ENCODE measurements at regions of chr6 and their contacts with region 1.

Region 1: GRCh38 chr6:138115877-138116660 is 8.8 kb upstream of the PERP start:
- DNase-seq: peak; percentile 68
- H3K4me3 Mint-ChIP-seq: no peak overlapping the region
- H3K27ac Mint-ChIP-seq: no peak overlapping the region
- H3K4me1 Mint-ChIP-seq: no peaks in the 10 kb centered on the region
- H3K27me3 Mint-ChIP-seq: peaks cover 25% of the 10 kb centered on the region
- CTCF ChIP-seq: peak; percentile 79

Region 2: DNA sequence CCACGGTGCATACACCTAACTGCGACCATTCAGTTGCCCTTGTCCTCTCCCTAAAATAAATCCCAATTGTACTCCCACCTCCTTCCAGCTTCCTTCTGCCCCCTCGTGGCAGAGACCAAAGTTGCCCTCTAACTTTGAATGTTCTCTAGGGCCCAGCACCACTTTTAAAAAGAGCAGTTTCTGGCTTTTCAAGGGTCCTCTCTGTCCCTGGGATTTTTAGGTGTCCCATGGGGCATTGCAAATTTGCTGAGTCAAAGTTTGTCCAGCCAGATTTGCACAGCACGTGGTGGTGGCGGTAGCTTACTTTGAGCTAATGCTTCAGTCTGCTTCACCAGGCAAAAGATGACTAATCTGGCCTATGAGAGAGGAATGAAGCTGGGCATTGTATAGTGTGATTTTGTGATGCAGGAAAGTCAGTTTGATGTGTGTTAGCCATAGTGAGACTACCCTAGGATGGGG is 109.0 kb before region 1 on chr6:
- CTCF ChIA-PET with region 1: interaction called, 40 read pairs
- POLR2A ChIA-PET with region 1: interaction called, 4 read pairs
- intact Hi-C with region 1: no loop called
- DNase-seq: peak; percentile 69
- H3K4me3 Mint-ChIP-seq: no peak overlapping the region
- H3K27ac Mint-ChIP-seq: peak overlapping the region; percentile 47
- H3K4me1 Mint-ChIP-seq: peaks cover 17% of the 10 kb centered on the region
- H3K27me3 Mint-ChIP-seq: no peaks in the 10 kb centered on the region
- CTCF ChIP-seq: peak; percentile 49

Region 3: DNA sequence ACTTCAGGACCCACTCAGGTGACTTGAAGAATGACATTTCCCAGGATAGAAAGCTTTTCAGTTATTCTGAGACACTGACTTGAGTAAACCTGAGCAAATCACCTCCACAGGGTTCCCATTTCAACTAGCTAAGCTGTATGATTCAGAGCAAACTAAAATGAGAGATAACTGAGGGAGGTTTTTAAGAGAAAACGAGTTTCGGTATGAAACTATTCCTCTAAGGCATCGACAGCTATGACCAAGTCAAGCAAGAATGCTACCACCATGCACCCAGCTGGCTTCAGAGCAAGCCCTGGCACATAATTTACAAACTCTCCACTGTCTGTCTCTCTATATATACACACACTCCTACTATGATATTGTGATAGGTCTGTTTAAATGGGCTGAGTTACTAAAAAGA is 84.2 kb before region 1 on chr6:
- CTCF ChIA-PET with region 1: no interaction called
- POLR2A ChIA-PET with region 1: no interaction called
- intact Hi-C with region 1: no loop called
- DNase-seq: peak; percentile 62
- H3K4me3 Mint-ChIP-seq: peak overlapping the region; percentile 55
- H3K27ac Mint-ChIP-seq: peak overlapping the region; percentile 91
- H3K4me1 Mint-ChIP-seq: peaks cover 62% of the 10 kb centered on the region
- H3K27me3 Mint-ChIP-seq: no peaks in the 10 kb centered on the region
- CTCF ChIP-seq: no peak

Region 4: GRCh38 chr6:138073264-138073663 is 42.8 kb before region 1 on chr6:
- CTCF ChIA-PET with region 1: no interaction called
- POLR2A ChIA-PET with region 1: no interaction called
- intact Hi-C with region 1: no loop called
- DNase-seq: no peak
- H3K4me3 Mint-ChIP-seq: no peak overlapping the region
- H3K27ac Mint-ChIP-seq: no peak overlapping the region
- H3K4me1 Mint-ChIP-seq: no peaks in the 10 kb centered on the region
- H3K27me3 Mint-ChIP-seq: no peaks in the 10 kb centered on the region
- CTCF ChIP-seq: no peak

Region 5: DNA sequence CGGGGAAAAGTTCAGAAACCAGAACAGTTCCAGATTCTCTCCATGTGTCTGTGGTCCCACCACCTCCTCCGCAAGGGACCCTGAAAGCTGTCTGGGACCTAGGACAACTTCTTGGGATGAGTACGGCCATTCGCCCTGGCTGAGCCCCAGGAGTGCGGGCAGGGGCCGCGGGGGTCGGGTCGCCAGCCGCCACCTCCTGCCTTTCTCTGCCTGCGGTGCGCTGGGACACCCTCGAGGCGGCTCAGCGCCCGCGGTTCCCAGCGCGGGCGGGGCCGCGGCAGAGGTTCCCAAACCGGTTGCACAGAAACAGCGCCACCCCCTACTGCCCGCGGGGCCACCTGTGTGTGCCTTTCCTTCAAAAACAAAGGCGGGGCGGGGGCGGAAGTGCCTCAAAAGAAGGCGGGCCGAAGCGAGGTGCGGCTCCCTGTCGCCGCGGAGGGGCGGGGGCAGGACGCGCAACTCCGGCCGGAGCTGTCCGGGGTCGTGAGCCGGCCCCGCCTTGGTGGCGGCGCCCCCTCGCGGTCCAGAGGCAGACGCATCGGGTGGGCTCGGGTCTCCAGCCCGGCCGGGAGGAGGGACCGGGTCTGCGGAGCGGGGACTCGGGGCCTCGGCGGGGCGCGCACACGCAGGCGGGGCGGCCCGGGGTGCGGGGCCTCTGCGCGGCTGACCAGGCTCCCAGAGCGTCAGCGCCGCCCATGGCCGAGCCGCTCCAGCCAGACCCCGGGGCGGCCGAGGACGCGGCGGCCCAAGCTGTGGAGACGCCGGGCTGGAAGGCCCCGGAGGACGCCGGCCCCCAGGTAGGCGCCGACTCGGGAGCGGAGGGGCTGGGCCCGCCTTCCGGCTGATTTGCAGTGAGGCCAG is 288.0 kb after region 1 on chr6 and contains the start of gene HEBP2:
- CTCF ChIA-PET with region 1: interaction called, 11 read pairs
- POLR2A ChIA-PET with region 1: interaction called, 4 read pairs
- intact Hi-C with region 1: loop called (anchors 2 kb)
- DNase-seq: peak; percentile 96
- H3K4me3 Mint-ChIP-seq: peak within 1 kb of the TSS; percentile 80
- H3K27ac Mint-ChIP-seq: peak within 1 kb of the TSS; percentile 77
- H3K4me1 Mint-ChIP-seq: peaks cover 11% of the 10 kb centered on the region
- H3K27me3 Mint-ChIP-seq: no peaks in the 10 kb centered on the region
- CTCF ChIP-seq: peak; percentile 12
- total RNA-seq, gene HEBP2: 71.2 and 89.7 TPM in 2 replicates

Region 6: DNA sequence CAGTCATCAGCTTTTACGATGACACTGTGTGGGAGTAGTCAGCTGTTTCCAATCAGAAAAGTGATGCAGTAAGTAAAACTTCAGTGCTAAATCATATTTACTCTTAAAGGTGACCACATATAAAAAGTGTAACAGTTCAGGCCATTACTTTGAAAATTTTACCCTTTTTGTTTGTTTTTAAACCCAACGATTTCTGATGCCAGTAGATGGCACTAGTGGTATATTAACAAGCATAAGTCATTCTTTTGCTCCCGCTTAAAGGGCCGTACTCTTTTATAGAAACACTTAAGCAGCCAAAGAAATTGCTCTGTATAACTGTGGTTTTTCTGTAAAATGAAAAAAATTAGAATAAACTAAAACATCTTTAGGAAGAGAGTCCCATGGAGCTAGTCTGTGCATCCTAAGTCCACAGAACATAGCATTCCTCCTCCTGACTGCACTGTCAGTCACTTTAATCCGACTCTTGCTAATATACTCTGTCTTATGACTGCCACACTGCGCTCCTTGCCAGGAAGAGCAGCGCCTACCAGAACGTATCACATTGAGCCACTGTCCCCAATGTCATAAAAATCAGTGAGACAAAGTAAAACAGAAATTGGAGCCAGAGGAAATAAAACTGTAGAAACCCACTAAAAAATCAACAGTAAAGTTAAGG is 313.0 kb after region 1 on chr6:
- CTCF ChIA-PET with region 1: interaction called, 32 read pairs
- POLR2A ChIA-PET with region 1: interaction called, 3 read pairs
- intact Hi-C with region 1: loop called (anchors 2 kb)
- DNase-seq: peak; percentile 61
- H3K4me3 Mint-ChIP-seq: no peak overlapping the region
- H3K27ac Mint-ChIP-seq: no peak overlapping the region
- H3K4me1 Mint-ChIP-seq: no peaks in the 10 kb centered on the region
- H3K27me3 Mint-ChIP-seq: no peaks in the 10 kb centered on the region
- CTCF ChIP-seq: peak; percentile 55

Region 7: GRCh38 chr6:138517635-138518034 is 401.6 kb after region 1 on chr6:
- CTCF ChIA-PET with region 1: interaction called, 22 read pairs
- POLR2A ChIA-PET with region 1: no interaction called
- intact Hi-C with region 1: no loop called
- DNase-seq: peak; percentile 54
- H3K4me3 Mint-ChIP-seq: no peak overlapping the region
- H3K27ac Mint-ChIP-seq: no peak overlapping the region
- H3K4me1 Mint-ChIP-seq: peaks cover 10% of the 10 kb centered on the region
- H3K27me3 Mint-ChIP-seq: no peaks in the 10 kb centered on the region
- CTCF ChIP-seq: peak; percentile 56

Region 8: DNA sequence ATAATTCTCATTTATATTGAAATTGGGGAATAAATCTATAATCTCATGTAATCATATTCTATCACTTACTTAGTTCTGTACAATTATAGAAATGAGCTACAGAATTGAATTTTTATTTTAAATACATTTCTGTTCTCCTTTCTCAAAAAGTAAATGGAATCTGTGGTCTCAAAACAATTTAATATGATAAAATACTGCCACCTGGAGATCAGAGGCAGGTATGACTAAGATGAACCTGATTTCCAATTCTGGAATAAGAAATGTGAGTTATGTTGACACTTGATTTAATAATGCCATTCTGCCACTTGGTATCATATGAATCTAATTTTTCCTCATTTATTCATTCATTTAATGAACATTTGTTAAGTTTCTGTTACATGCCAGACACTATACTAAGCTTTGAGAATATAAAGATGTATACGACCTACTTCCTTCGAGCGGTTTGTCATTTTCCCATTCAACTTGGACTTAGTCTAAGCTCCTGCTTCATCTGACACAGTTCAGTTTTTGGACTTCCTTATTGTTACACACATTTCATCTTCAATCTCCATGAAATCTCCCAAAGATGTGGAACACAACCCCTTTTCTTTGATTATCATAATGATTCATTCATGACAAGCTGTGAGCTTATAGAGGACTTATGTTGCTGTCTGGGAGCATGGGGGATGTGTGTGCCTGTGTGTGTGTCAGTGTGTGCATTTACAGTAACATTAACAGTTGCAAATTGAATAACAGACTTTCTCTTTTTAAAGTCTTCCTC is 650.0 kb after region 1 on chr6:
- CTCF ChIA-PET with region 1: interaction called, 13 read pairs
- POLR2A ChIA-PET with region 1: no interaction called
- intact Hi-C with region 1: loop called (anchors 1 kb)
- DNase-seq: peak; percentile 47
- H3K4me3 Mint-ChIP-seq: no peak overlapping the region
- H3K27ac Mint-ChIP-seq: no peak overlapping the region
- H3K4me1 Mint-ChIP-seq: no peaks in the 10 kb centered on the region
- H3K27me3 Mint-ChIP-seq: no peaks in the 10 kb centered on the region
- CTCF ChIP-seq: peak; percentile 43

Region 9: DNA sequence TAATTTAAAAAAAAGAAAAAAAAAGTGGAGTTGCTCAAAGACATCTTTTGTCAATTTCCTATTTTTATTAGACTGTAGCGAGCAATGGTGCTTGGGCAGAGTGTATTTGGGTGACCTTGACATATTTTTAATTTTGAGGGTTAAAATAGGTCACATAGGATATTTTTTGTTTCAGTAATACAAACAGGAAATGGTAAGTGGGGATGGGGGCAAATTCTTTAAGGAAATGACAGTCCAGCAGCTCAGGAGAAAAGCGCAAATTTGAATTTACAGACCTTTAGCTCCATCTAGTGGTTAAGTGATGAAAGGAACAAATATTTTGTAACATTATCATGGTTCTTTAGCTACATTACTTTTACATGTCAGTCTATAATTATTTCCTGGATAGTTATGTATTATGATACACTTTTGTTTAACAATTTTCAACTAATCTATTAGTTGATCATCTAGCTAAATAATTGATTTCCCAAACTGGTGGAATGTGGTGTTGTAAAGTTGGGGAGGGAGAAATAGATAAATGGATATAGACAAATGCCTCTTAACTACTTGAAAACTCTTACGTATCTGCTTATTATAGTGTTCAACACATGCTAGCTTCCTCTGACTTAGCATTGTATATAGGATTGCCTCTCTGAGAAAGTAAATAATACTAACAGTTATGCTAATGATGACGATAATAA is 1248.4 kb after region 1 on chr6:
- CTCF ChIA-PET with region 1: no interaction called
- POLR2A ChIA-PET with region 1: no interaction called
- intact Hi-C with region 1: loop called (anchors 10 kb)
- DNase-seq: peak; percentile 53
- H3K4me3 Mint-ChIP-seq: no peak overlapping the region
- H3K27ac Mint-ChIP-seq: no peak overlapping the region
- H3K4me1 Mint-ChIP-seq: no peaks in the 10 kb centered on the region
- H3K27me3 Mint-ChIP-seq: no peaks in the 10 kb centered on the region
- CTCF ChIP-seq: peak; percentile 66